CD8-positive, alpha-beta T cell (primary cell): ENCODE measurements at regions of chr14 and their contacts with region 1.

Region 1: DNA sequence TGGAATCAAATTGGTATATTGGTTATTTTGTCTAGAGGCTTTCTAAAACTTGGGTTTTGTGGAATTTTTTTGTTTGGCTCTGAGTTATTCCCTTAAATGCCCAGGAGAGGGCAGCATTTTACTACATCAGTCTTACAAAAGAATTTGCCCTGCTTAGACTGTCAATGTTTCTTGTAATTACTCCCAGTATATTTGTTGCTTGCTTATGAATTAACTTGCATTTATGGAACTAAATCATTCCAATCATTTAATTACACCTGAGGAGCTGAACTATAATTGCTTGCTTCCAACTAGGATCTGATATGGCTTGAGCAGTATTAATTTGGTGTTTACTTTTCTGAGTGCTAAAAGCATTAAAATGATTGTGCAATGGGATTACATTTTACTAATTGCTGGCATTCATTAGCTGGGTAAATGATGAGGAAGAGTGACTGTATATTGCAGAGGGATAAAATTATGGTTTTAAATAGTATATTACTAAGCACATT is 48.7 kb downstream of the MIPOL1 start:
- DNase-seq: peak in 2 of 9 experiments; percentile 16 to 29
- ATAC-seq: no peak
- H3K4me3 ChIP-seq: no peak overlapping the region
- H3K4me3 Mint-ChIP-seq: no peak overlapping the region
- H3K27ac ChIP-seq: no peak overlapping the region
- H3K27ac Mint-ChIP-seq: no peak overlapping the region
- H3K4me1 ChIP-seq: no peaks in the 10 kb centered on the region
- H3K4me1 Mint-ChIP-seq: no peaks in the 10 kb centered on the region
- H3K27me3 ChIP-seq: no peaks in the 10 kb centered on the region
- H3K27me3 Mint-ChIP-seq: no peaks in the 10 kb centered on the region
- CTCF ChIP-seq: peak; percentile 81

Region 2: DNA sequence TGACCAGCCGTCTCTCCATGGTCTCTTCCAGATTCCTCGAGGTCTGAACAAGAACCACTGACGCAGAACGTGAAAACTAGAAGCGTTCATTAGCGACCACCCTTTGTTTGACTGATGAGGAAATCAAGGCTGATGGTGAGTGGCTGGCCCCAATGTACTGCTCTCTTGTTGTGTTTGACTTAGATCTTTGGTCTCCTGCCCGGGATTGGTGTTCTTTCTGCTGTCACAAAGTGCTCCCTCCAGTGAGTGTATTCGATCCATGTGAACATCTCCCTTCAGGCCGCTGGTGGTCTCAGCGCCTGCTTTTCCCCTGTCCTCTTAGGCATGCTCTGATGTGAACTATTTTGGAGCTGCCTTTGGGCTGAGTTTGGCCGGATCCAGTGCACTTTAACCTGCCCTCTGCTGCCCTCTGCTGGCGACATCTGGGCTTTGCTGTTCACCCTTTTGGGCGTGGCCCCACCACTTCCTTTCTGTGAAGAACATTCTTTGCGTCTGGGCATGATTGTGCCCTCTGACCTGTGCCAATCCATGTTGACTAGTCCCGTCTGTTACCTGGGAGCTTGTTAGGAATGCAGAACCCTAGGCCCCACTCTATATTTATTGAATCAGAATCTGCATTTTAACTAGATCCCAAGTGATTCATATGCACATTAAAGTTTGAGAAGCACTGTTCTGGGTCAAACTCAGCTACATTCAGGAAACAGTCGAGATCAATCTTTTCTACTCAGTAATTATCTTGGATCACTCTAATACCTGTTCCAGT is 628.1 kb after region 1 on chr14:
- CTCF ChIA-PET with region 1: no interaction called
- POLR2A ChIA-PET with region 1: no interaction called
- intact Hi-C with region 1: loop called (anchors 1 to 2 kb)
- DNase-seq: peak; percentile 37 to 81 (median 71)
- ATAC-seq: peak; percentile 78
- H3K4me3 ChIP-seq: no peak overlapping the region
- H3K4me3 Mint-ChIP-seq: no peak overlapping the region
- H3K27ac ChIP-seq: no peak overlapping the region
- H3K27ac Mint-ChIP-seq: no peak overlapping the region
- H3K4me1 ChIP-seq: no peaks in the 10 kb centered on the region
- H3K4me1 Mint-ChIP-seq: peaks cover 6% of the 10 kb centered on the region
- H3K27me3 ChIP-seq: no peaks in the 10 kb centered on the region
- H3K27me3 Mint-ChIP-seq: peaks cover 5% of the 10 kb centered on the region
- CTCF ChIP-seq: peak; percentile 61

Region 3: GRCh38 chr14:38867561-38868150 is 1621.2 kb after region 1 on chr14:
- CTCF ChIA-PET with region 1: no interaction called
- POLR2A ChIA-PET with region 1: no interaction called
- intact Hi-C with region 1: loop called (anchors 5 kb)
- DNase-seq: peak in 8 of 9 experiments; percentile 26 to 70 (median 48)
- ATAC-seq: peak; percentile 34
- H3K4me3 ChIP-seq: no peak overlapping the region
- H3K4me3 Mint-ChIP-seq: no peak overlapping the region
- H3K27ac ChIP-seq: no peak overlapping the region
- H3K27ac Mint-ChIP-seq: no peak overlapping the region
- H3K4me1 ChIP-seq: no peaks in the 10 kb centered on the region
- H3K4me1 Mint-ChIP-seq: no peaks in the 10 kb centered on the region
- H3K27me3 ChIP-seq: no peaks in the 10 kb centered on the region
- H3K27me3 Mint-ChIP-seq: peaks cover 2% of the 10 kb centered on the region
- CTCF ChIP-seq: peak; percentile 74

Region 4: GRCh38 chr14:39015360-39015961 is 1769.0 kb after region 1 on chr14:
- CTCF ChIA-PET with region 1: no interaction called
- POLR2A ChIA-PET with region 1: no interaction called
- intact Hi-C with region 1: loop called in 1 of 2 experiments (anchors 2 kb)
- DNase-seq: peak in 2 of 9 experiments; percentile 32 to 51
- ATAC-seq: no peak
- H3K4me3 ChIP-seq: no peak overlapping the region
- H3K4me3 Mint-ChIP-seq: no peak overlapping the region
- H3K27ac ChIP-seq: no peak overlapping the region
- H3K27ac Mint-ChIP-seq: no peak overlapping the region
- H3K4me1 ChIP-seq: no peaks in the 10 kb centered on the region
- H3K4me1 Mint-ChIP-seq: no peaks in the 10 kb centered on the region
- H3K27me3 ChIP-seq: no peaks in the 10 kb centered on the region
- H3K27me3 Mint-ChIP-seq: no peaks in the 10 kb centered on the region
- CTCF ChIP-seq: peak; percentile 83